HEK293 (cell line): ENCODE measurements at regions of chr6 and their contacts with region 1.

Region 1: DNA sequence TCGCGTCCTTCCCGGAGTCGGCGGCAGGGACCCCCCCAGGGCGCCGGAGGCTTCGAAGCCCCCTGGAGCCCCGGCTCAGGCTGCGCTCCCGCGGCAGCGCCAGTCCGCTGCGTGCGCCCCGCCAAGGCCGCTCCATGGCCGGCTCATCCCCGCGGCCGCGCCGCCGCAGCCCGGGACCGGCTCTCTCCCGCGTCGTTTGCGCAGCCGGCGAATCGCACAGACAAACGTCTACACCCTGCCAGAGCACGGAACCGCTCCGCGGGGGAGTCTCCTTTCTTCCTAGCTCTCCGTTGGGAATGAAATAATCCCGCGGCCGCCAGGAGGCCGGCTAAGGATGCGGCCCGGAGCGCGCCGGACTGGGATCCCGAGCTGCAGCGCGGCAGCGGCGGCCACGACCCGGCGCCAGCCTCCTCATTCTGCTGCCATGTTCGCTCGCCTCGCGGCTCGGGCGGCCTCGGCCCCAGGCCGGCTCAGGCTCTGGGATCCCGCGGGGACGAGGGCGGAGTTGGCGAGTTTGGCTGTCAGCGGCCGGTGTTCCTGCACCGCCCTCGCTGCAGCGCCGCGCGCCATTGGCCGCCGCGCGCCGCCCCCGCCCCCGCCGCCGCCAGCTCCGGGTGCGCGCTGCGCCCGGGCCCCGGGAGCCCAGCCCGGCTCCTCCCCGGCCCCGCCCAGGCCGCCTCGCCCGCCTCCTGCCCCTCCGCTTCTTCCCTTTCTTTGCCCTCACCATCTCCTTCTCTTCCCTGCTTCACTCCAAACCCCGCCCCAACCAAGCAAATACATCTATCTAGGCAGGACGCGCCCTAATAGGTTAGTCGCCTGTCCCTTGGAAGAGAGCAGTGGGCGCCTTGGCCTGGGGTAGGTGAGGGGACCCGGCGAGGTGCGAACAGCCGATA is at the start of gene GFOD1:
- H3K4me3 ChIP-seq: peak within 1 kb of the TSS; percentile 65
- H3K27ac ChIP-seq: peak within 1 kb of the TSS; percentile 95
- H3K4me1 ChIP-seq: peaks cover 9% of the 10 kb centered on the region
- CTCF ChIP-seq: no peak; the same call in 1 of the 2 replicates

Region 2: GRCh38 chr6:13368731-13369115 is 118.6 kb before region 1 on chr6:
- CTCF ChIA-PET with region 1: no interaction called
- POLR2A ChIA-PET with region 1: no interaction called
- H3K4me3 ChIP-seq: no peak overlapping the region
- H3K27ac ChIP-seq: no peak overlapping the region
- H3K4me1 ChIP-seq: peaks cover 10% of the 10 kb centered on the region
- CTCF ChIP-seq: no peak

Region 3: DNA sequence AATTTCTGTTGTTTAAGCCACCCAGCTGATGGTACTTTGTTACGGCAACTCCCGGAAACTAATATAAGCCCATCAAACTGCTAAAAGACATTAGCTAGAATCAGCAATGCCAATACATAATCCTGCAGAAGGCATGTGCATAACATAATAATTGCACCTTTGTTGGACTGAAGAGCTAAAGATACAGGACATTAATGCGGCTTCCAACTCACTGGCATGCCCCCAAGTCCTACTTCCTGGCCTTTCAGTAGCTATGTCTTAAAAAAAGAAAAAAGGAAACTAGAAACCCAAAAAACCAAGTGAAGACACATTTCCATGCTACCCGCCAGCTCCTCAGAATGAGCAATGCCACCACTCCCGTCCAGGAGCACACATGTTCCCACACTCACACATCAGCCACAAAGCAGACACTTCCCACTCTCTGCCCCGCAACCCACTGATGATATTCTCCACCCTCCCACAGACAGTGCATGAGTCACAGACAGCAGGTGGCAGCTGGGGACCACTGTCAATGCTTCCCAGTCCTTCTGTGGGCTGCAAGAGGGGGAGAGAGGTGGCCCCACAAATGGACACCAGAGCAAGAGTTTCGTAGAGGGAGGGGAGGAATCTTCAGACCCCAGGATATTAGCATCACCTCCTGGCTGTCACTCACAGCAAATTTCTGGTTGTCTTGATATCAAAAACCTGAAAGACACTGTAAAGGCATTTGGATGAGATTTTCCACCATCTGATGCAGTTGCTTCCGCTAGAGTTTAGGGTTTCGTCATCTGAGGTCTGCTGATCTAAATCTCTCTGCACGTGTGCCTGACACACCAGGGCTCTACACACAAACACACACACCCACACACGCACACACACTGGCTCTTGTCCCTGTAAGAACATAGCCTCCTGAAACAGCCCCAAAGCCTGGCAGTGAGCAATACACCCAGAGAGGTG is 32.8 kb before region 1 on chr6:
- CTCF ChIA-PET with region 1: interaction called, 3 read pairs
- POLR2A ChIA-PET with region 1: interaction called, 10 read pairs
- H3K4me3 ChIP-seq: no peak overlapping the region
- H3K27ac ChIP-seq: no peak overlapping the region
- H3K4me1 ChIP-seq: peaks cover 3% of the 10 kb centered on the region; the same call in 1 of the 2 replicates
- CTCF ChIP-seq: peak; percentile 31; the same call in 1 of the 2 replicates